HAP-1 (cell line): ENCODE measurements at regions of chr9 and their contacts with region 1.

Region 1: GRCh38 chr9:128361986-128362646 is 9.1 kb upstream of the URM1 start:
- DNase-seq: peak; percentile 83 to 91
- H3K4me3 ChIP-seq: no peak overlapping the region
- H3K4me1 ChIP-seq: peaks cover 23% of the 10 kb centered on the region
- H3K27me3 ChIP-seq: no peaks in the 10 kb centered on the region

Region 2: GRCh38 chr9:128412120-128412790 is 50.1 kb after region 1 on chr9:
- in situ Hi-C with region 1: loop called (anchors 5 kb)
- DNase-seq: peak; percentile 78 to 94
- H3K4me3 ChIP-seq: no peak overlapping the region
- H3K4me1 ChIP-seq: peaks cover 22% of the 10 kb centered on the region
- H3K27me3 ChIP-seq: no peaks in the 10 kb centered on the region